ENCODE measurements at regions of chr17 and their contacts with region 1.

Region 1: GRCh38 chr17:45317112-45317928 is 500 bp upstream of the MAP3K14 start:
- DNase-seq: peak; percentile 100
- H3K4me3 Mint-ChIP-seq: peak overlapping the region; percentile 88
- H3K27ac Mint-ChIP-seq: peak overlapping the region; percentile 95
- H3K4me1 Mint-ChIP-seq: peaks cover 85% of the 10 kb centered on the region
- H3K27me3 Mint-ChIP-seq: no peaks in the 10 kb centered on the region
- CTCF ChIP-seq: peak; percentile 11

Region 2: GRCh38 chr17:44932496-44933097 is 384.7 kb before region 1 on chr17:
- CTCF ChIA-PET with region 1: no interaction called
- intact Hi-C with region 1: no loop called
- DNase-seq: no peak
- H3K4me3 Mint-ChIP-seq: no peak overlapping the region
- H3K27ac Mint-ChIP-seq: no peak overlapping the region
- H3K4me1 Mint-ChIP-seq: no peaks in the 10 kb centered on the region
- H3K27me3 Mint-ChIP-seq: no peaks in the 10 kb centered on the region
- CTCF ChIP-seq: no peak

Region 3: DNA sequence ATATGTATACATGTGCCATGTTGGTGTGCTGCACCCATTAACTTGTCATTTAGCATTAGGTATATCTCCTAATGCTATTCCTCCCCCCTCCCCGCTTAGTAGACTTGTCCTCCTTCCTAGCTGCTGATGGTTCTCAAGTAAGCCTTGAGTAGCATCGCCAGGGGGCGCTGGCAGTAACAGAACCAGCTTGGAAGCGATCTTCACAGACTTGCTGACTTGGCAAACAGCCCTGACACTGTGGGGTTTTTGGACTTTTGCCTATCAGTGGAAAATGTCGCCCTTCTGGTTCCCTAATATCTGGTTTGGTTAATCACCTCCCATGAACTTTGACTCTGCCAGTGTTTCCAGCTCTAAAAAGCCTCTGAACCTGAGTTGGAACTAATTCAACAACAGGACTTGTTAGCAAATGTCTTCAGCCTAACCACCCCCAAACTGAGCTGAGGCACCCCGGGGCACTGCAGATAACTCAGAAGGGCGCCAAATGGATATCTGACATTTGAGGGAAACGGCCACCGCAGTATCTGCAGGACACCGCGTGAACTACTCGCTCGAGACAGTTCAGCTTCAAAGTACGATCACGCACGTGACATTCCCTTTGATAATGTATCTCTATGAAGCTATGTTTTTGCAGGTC is 40.0 kb before region 1 on chr17:
- CTCF ChIA-PET with region 1: interaction called, 24 read pairs
- intact Hi-C with region 1: loop called (anchors 2 kb)
- DNase-seq: peak; percentile 95
- H3K4me3 Mint-ChIP-seq: no peak overlapping the region
- H3K27ac Mint-ChIP-seq: no peak overlapping the region
- H3K4me1 Mint-ChIP-seq: peaks cover 13% of the 10 kb centered on the region
- H3K27me3 Mint-ChIP-seq: no peaks in the 10 kb centered on the region
- CTCF ChIP-seq: peak; percentile 84

Region 4: DNA sequence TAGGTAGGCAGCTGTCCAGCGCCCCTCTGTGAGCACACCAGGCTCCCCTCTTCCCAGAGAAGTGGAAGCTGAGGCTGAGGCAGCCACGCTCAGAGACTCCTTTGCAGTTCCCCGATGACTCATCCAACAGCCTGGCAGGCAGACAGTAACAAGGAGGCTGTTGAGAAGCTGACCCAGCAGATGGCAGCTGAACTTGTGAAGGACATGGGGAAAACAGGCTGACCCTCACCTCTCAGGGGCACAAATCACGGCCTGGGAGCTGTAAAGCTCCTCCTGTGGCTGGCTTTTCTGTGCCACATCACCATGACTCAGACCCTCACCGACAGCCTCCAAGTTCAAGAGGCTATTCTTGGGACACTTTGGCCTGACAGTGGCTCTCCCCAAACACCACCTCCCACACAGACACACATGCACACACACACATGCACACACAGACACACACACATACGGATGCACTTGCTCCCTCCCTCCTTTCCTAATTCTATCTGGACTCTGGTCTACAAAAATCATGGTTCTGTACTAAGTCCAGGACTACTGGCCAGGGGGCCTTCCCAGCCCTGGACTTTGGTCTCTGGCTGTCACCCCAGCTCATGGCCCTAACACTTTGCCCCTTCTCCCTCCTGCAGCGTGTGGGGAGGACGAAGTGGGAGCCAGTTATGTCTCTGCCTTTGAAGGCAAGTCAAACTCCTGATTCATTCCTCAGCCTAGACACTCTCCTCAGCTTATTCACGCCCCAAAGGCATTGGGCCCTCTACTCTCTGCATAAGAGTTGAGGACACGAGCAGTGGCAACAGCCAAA is 23.7 kb before region 1 on chr17:
- CTCF ChIA-PET with region 1: interaction called, 32 read pairs
- intact Hi-C with region 1: no loop called
- DNase-seq: peak; percentile 81
- H3K4me3 Mint-ChIP-seq: peak overlapping the region; percentile 21
- H3K27ac Mint-ChIP-seq: peak overlapping the region; percentile 66
- H3K4me1 Mint-ChIP-seq: peaks cover 73% of the 10 kb centered on the region
- H3K27me3 Mint-ChIP-seq: no peaks in the 10 kb centered on the region
- CTCF ChIP-seq: no peak

Region 5: DNA sequence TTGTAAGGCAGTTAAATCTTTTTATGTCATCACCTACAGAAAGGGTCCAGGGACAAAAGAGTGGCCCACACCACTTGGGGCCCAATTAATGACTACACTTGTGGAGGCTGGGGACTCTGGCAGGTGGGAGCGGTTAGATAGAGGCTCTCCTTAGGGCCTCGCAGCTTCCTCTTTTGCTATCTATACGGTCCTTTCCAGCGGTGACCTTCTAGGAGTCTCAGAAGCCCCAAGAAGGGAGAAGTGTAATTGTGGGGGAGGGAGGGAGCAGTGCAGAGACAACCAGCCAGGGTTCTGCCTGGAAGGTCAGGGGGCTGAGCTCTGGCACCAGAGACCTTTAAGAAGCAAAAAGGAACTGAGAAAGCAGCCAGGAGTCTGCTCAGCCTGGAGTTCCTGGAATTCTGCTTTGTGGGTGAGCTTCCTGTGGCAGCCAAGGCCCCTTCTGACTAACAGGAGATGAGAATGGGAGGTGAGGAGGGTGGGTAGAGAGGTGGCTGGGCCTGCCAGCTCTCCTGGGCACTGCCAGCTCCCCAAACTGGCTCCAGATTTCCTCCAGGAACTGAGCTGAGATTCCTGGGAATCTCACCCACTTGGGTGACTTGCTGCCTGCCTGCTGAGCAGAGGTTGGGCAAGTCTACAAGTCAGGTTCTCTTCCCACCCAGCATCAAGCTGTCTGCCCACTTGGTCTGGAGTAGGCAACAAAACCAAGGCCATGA is 15.8 kb after region 1 on chr17:
- CTCF ChIA-PET with region 1: interaction called, 12 read pairs
- intact Hi-C with region 1: no loop called
- DNase-seq: no peak
- H3K4me3 Mint-ChIP-seq: no peak overlapping the region
- H3K27ac Mint-ChIP-seq: no peak overlapping the region
- H3K4me1 Mint-ChIP-seq: no peaks in the 10 kb centered on the region
- H3K27me3 Mint-ChIP-seq: no peaks in the 10 kb centered on the region
- CTCF ChIP-seq: no peak

Region 6: DNA sequence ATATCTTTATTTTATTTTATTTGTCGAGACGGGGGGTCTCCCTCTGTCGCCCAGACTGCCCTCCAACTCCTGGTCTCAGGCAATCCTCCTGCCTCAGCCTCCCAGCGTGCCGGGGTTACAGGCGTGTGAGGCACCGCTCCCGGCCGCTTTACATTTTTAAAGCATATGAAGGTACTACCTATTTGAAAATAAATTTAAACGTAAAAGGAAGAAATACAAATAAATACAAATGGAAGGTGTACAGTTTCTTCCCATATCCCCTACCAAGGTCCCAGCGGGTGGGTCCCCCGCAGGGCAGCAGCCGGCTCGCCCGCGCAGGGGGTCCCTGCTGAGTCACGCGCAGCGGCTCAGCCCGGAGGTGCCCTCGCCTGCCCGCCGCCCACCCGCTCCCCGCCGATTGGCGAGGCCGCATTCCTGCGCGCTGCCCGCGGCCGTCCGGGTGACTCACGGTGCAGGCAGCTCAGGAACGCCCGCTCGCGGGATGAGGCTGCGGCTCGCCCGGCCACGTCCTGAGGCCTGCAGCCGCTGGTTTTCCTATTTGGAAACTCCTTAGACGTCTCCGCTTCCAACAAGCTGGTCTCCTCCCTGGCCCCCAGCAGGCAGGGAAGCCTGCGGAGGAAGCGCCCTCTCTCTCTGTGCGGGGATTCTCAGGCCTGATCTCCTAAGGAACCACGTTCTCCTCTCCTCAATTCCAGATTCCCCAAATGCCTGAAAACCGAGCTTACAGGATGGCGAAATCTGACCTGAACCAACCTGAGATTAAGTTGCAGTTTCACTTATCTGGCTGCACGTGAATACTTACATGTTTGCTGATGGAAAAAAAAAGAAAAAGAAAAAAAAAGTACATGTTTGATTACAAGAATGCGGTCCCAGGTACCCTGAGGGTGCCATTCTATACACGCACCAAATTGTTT is 54.4 kb after region 1 on chr17:
- CTCF ChIA-PET with region 1: interaction called, 32 read pairs
- intact Hi-C with region 1: loop called (anchors 2 kb)
- DNase-seq: peak; percentile 100
- H3K4me3 Mint-ChIP-seq: peak overlapping the region; percentile 78
- H3K27ac Mint-ChIP-seq: peak overlapping the region; percentile 88
- H3K4me1 Mint-ChIP-seq: peaks cover 44% of the 10 kb centered on the region
- H3K27me3 Mint-ChIP-seq: no peaks in the 10 kb centered on the region
- CTCF ChIP-seq: no peak

Region 7: DNA sequence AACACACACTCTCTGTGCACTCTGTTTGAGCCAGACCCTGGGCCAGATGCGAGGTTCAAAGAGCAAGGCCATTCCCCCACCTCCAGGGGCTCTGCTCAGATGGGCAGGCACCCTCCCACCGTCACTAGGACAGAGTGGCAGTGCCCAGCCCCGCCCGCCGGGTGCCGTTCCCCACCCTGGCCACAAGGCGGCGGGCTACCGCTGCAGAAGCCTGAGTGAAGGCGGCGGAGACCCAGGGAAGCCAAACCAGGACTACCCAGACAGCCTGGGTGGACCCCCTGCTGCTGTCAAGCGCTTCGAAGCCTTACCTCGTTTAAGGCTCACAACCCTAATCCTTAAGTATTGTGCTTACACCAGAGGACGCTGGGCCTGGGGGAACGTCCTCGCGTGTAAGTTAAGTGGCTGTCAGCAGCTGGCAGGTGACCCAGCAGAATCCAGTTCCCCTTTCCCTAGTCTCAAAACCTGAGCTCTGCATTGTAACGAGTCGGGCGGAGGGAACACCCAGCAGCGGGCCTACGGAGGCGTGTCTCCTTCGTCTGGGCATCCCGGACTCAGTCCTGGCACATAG is 110.8 kb after region 1 on chr17:
- CTCF ChIA-PET with region 1: interaction called, 10 read pairs
- intact Hi-C with region 1: no loop called
- DNase-seq: peak; percentile 96
- H3K4me3 Mint-ChIP-seq: peak overlapping the region; percentile 44
- H3K27ac Mint-ChIP-seq: peak overlapping the region; percentile 71
- H3K4me1 Mint-ChIP-seq: peaks cover 65% of the 10 kb centered on the region
- H3K27me3 Mint-ChIP-seq: no peaks in the 10 kb centered on the region
- CTCF ChIP-seq: peak; percentile 100